HAP-1 (cell line): ENCODE measurements at regions of chr7 and their contacts with region 1.

Region 1: DNA sequence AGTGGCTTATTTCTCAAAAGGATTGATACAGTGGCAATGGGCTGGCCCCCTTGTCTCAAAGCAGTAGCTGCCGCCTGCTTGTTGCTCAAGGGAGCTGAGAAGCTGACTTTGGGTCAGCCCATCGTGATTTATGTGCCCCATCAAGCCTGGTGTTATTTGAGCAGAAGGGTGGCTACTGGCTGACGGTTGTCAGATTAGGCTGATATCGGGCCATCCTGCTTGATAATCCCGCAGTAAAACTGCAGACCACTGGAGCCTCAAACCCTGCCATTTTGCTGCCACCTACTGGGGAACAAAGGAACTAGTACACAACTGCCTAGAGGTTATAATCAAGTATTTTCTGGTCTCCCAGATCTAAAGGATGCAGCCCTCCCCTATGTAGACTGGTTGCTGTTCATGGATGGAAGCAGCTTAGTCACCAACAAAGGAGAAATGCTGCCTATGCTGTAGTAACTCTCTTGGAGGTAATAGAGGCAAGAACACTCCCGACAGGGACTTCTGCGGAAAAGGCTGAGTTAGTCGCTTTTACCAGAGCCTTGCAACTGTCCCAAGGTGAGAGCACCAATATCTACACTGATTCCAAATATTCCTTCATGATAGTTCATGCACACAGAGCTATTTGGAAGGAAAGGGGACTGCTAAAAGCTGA is 65.9 kb upstream of the ZNF92 start:
- DNase-seq: peak; percentile 85
- H3K4me3 ChIP-seq: no peak overlapping the region
- H3K4me1 ChIP-seq: peaks cover 3% of the 10 kb centered on the region
- H3K27me3 ChIP-seq: no peaks in the 10 kb centered on the region

Region 2: GRCh38 chr7:65219623-65220022 is 88.2 kb before region 1 on chr7:
- in situ Hi-C with region 1: loop called (anchors 5 kb)
- DNase-seq: no peak
- H3K4me3 ChIP-seq: no peak overlapping the region
- H3K4me1 ChIP-seq: no peaks in the 10 kb centered on the region
- H3K27me3 ChIP-seq: no peaks in the 10 kb centered on the region

Region 3: DNA sequence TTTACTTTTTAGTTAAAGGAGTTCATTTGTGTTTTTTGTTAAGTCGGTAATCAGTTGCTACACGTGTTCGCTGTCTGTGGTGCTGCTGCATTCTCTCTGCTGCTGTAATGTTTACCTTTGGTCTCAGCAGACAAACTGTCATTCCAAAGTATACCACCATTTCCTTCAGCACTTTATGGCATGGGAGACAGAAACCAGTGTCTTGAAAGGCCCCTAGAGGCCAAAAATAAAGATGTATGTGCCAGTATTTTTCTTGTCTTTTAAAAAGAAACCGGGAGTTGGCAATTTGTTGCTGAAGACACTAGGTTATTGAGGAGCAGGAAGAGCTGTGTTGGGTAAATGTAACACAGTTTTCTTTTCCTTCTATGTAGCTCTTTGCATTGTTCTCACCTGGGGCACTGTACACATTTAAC is 90.0 kb after region 1 on chr7:
- in situ Hi-C with region 1: no loop called
- DNase-seq: no peak
- H3K4me3 ChIP-seq: no peak overlapping the region
- H3K4me1 ChIP-seq: no peaks in the 10 kb centered on the region
- H3K27me3 ChIP-seq: no peaks in the 10 kb centered on the region

Region 4: DNA sequence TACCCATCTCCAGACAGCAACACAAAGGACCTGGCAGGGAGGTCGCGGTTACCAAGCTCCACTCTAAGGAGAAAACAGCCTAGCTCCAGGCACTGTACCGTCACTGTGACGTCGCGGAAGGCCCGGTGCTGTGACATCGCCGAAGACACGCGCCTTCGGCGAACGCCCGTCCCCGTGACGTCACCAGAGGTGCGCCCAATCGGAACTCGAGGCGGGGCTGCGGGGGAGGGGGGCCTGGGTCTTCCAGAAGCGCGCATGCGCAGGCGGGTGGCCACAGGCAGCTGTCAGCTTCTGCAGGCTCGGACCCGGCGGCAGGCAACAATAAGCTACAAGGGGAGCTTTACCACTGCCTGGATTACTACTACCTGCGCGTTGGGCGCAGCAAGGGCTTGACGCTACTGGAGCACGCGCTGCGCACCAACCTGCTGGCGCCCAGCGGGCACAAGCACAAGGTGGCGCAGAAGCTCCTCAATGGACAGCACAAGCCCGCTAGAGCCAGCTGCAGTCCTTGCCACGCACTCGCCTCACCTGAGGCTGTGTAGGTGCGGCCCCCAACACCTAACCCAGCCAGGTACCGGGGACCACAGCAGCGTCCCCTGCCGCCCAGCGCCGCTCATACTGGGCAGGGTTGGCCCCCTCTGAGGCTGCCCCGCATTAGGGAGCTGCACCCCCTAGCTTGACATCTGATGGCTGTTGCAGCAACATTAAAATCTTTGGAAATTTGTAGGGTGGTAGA is 1105.8 kb after region 1 on chr7:
- in situ Hi-C with region 1: no loop called
- DNase-seq: no peak
- H3K4me3 ChIP-seq: no peak overlapping the region
- H3K4me1 ChIP-seq: no peaks in the 10 kb centered on the region
- H3K27me3 ChIP-seq: no peaks in the 10 kb centered on the region